H1 (cell line): ENCODE measurements at regions of chr1 and their contacts with region 1.

Region 1: GRCh38 chr1:20732588-20733360 is at the start of gene SH2D5:
- DNase-seq: peak; percentile 56 to 77
- H3K4me3 ChIP-seq: peak within 1 kb of the TSS; percentile 56 to 71 (median 69)
- H3K27ac ChIP-seq: no peak within 1 kb of the TSS
- H3K4me1 ChIP-seq: peaks cover 5 to 40% (median 29%) of the 10 kb centered on the region in 4 experiments
- H3K27me3 ChIP-seq: peaks cover 2 to 30% (median 27%) of the 10 kb centered on the region in 4 experiments
- CTCF ChIP-seq: peak in 2 of 3 experiments; percentile 30 to 36; a peak in 3 of 4 replicates
- EP300 ChIP-seq: no peak
- POLR2A ChIP-seq: no peak
- RAD21 ChIP-seq: peak; percentile 34 to 52
- total RNA-seq, gene SH2D5: 18.3 and 18.4 TPM in 2 replicates

Region 2: DNA sequence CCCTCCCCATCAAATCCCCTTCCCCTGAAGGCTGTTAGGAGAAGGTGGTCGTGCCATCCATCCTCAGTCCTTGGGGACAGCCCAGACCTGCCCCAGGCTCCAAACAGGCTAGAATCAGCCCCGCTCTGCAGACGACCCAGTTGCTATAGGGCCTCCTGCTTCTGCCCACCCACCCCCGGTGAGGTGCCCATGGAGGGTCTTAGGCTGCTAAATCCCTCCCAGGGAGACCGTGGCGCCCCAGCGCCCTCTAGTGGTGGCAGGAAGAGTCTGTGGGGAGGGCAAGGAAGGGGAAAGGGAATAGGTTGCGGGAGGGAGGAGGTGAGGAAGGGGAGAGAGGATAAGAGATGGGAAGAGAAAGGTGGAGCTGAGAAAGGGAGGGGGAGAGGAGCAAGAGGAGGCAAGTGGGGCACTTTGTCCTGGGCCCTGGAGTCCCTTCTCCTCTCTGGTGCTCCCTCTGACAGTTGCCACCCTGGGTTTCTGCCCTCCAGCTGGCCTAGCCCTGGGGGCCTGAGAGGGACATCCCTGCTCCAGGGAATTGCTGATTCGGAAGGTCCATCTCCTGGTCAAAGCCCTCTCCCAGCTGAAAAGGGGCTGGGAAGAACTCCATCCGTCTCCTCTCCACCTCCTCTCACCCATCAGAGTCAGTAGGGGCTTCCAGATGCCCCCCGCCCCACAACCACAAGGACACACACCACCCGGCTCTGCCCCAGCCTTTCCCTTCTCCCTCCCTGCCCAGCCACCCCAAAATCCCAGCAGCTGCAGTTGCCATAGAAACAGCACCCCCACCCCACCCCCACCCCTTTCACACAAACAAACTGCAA is 302.2 kb before region 1 on chr1:
- CTCF ChIA-PET with region 1: no interaction called
- POLR2A ChIA-PET with region 1: no interaction called
- DNase-seq: peak; percentile 50 to 94
- H3K4me3 ChIP-seq: no peak overlapping the region
- H3K27ac ChIP-seq: no peak overlapping the region
- H3K4me1 ChIP-seq: peaks cover 0 to 6% (median 0%) of the 10 kb centered on the region in 4 experiments; a peak in 2 of 7 replicates
- H3K27me3 ChIP-seq: peaks cover 0 to 5% (median under 1%) of the 10 kb centered on the region in 4 experiments; a peak in 3 of 7 replicates
- CTCF ChIP-seq: peak; percentile 93 to 96 (median 93)
- EP300 ChIP-seq: no peak
- POLR2A ChIP-seq: no peak
- RAD21 ChIP-seq: peak; percentile 96 to 98

Region 3: GRCh38 chr1:20696397-20697329 is 36.1 kb before region 1 on chr1:
- CTCF ChIA-PET with region 1: interaction called, 82 read pairs
- POLR2A ChIA-PET with region 1: interaction called, 16 read pairs
- DNase-seq: peak; percentile 82 to 90
- H3K4me3 ChIP-seq: peak overlapping the region; percentile 19 to 77 (median 64)
- H3K27ac ChIP-seq: peak overlapping the region; percentile 37; the same call in 1 of the 2 replicates
- H3K4me1 ChIP-seq: peaks cover 0 to 6% (median 4%) of the 10 kb centered on the region in 4 experiments; a peak in 3 of 7 replicates
- H3K27me3 ChIP-seq: no peaks in the 10 kb centered on the region; a peak in 1 of 7 replicates
- CTCF ChIP-seq: peak; percentile 83 to 96 (median 85)
- EP300 ChIP-seq: no peak; a peak in 1 of 3 replicates
- POLR2A ChIP-seq: no peak
- RAD21 ChIP-seq: peak; percentile 86 to 87

Region 4: GRCh38 chr1:20705196-20705755 is 27.5 kb before region 1 on chr1:
- CTCF ChIA-PET with region 1: interaction called, 16 read pairs
- POLR2A ChIA-PET with region 1: interaction called, 3 read pairs
- DNase-seq: no peak
- H3K4me3 ChIP-seq: no peak overlapping the region
- H3K27ac ChIP-seq: no peak overlapping the region
- H3K4me1 ChIP-seq: no peaks in the 10 kb centered on the region
- H3K27me3 ChIP-seq: no peaks in the 10 kb centered on the region
- CTCF ChIP-seq: no peak
- EP300 ChIP-seq: no peak
- POLR2A ChIP-seq: no peak
- RAD21 ChIP-seq: no peak

Region 5: DNA sequence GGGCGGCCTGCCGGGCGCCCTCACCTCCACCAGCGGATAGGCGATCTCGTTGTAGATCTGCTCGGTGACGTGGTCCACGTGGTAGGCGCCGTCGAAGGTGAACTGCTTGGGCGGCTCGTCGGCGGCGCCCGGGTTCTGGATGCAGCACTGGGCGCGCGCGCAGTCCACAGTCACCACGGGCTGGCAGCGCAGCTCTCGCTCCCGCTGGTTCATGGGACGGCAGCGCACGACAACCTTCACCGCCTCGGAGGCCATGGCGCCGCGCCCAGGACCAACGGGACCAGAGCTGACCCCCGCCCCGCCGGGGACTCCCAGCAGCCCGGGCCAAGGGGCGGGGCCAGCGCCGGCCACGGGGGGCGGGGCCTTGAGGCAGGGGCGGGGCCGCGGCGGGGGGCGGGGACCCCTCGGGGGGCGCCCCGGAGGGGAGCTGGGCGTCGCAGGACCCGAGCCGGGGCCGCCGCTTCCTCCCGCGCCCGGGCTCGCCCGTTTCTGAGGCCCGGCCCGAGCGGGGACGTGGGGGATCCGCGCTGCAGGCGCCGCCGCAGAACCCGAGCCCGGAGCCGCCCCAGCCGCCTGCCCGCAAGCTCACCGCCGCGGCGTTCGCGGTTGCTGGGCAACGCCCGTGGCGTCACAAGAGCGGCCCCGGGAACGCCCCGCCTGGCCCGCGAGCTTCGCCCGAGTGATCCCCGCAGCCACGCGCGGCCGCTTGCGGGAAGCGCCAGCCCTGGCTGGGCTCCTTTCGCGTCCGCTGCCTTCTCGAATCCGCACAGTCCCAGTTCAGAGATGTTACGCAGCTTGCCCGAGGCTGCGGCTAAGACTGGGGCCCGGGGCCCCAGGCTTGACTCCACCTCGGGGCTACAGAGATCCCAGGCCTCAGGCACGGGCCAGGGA is 15.1 kb before region 1 on chr1 and contains the start of gene KIF17:
- CTCF ChIA-PET with region 1: interaction called, 23 read pairs
- POLR2A ChIA-PET with region 1: interaction called, 68 read pairs
- DNase-seq: peak in 1 of 2 experiments; percentile 93
- H3K4me3 ChIP-seq: peak within 1 kb of the TSS; percentile 28 to 69 (median 56)
- H3K27ac ChIP-seq: no peak within 1 kb of the TSS; the same call in 1 of the 2 replicates
- H3K4me1 ChIP-seq: peaks cover 0 to 7% (median under 1%) of the 10 kb centered on the region in 4 experiments; a peak in 5 of 7 replicates
- H3K27me3 ChIP-seq: peaks cover 0 to 22% (median 10%) of the 10 kb centered on the region in 4 experiments; a peak in 6 of 7 replicates
- CTCF ChIP-seq: no peak
- EP300 ChIP-seq: no peak
- POLR2A ChIP-seq: no peak
- RAD21 ChIP-seq: no peak
- total RNA-seq, gene KIF17: 9.9 and 10.4 TPM in 2 replicates

Region 6: DNA sequence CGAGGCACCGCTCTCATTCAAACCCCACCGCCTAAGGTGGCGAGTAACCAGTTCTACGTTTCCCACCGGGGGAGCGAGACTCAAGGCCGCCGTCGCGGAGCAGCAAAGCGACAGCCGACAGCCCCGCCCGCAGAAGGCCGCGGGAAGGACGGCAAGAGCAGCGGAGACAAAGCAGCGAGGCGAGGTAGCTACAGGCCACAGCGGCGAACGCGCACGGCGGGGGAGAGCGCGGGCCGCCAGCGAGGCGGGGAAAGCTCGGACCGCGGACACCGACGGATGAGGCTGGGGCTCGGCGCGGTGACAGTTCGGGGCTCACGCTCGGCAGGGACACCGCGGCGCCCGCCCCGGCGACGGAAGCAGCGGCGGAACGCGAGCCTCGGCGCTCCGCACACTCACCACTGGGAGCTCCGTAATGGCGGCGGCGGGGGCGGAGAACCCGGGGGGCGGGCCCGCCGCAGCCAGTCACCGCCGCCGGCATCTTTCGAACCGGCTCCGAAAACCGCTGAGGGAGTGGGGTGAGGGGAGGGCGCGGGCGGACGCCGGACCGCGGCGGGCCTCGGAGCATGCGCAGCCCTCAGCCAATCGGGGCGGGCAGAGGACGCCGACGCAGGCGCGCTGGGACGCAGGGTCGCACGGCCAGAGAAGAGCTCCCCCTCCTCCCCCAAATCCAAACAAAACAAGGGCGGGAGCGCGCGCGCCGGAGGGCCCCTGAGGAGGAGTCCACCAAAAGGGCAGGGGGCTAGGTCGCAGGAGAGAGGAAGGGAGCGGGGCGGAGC is 53.7 kb after region 1 on chr1:
- CTCF ChIA-PET with region 1: no interaction called
- POLR2A ChIA-PET with region 1: interaction called, 10 read pairs
- DNase-seq: peak; percentile 92 to 96
- H3K4me3 ChIP-seq: peak overlapping the region; percentile 82 to 99 (median 92)
- H3K27ac ChIP-seq: peak overlapping the region; percentile 95
- H3K4me1 ChIP-seq: peaks cover 0 to 6% (median 6%) of the 10 kb centered on the region in 4 experiments; a peak in 3 of 7 replicates
- H3K27me3 ChIP-seq: no peaks in the 10 kb centered on the region
- CTCF ChIP-seq: no peak
- EP300 ChIP-seq: no peak
- POLR2A ChIP-seq: peak; percentile 63 to 82; a peak in 2 of 3 replicates
- RAD21 ChIP-seq: no peak

Region 7: DNA sequence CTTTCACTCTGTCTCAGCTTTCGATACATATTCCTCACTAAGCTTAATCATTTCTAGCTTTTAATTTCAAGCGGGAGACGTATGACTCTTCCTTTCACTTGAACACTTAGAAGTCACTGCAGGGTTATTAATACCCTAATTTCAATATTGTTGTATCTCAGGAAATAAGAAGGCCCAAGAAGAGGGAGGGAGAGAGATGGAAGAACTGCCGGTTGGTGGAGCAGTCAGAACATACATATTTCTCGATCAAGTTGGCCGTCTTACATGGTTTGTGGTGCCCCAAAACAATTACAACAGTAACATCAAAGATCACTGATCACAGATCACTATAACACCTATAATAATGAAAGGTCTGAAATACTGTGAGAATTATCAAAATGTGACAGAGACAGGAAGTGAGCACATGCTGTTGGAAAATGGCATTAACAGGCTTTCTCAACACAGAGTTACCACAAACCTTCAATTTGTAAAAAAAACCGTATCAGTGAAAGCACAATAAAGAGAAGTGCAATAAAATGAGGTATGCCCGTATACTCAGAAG is 199.7 kb after region 1 on chr1:
- CTCF ChIA-PET with region 1: no interaction called
- POLR2A ChIA-PET with region 1: no interaction called
- DNase-seq: no peak
- H3K4me3 ChIP-seq: no peak overlapping the region
- H3K27ac ChIP-seq: no peak overlapping the region
- H3K4me1 ChIP-seq: peaks cover 0 to 6% (median 4%) of the 10 kb centered on the region in 4 experiments; a peak in 3 of 7 replicates
- H3K27me3 ChIP-seq: no peaks in the 10 kb centered on the region
- CTCF ChIP-seq: no peak
- EP300 ChIP-seq: no peak
- POLR2A ChIP-seq: no peak
- RAD21 ChIP-seq: no peak